Dendritic cell treated with granulocyte-macrophage colony-stimulating factor and Interleukin-4, amounts not matched to agents 40 ng/mL and 50 ng/mL, for 4 days (primary cell): ENCODE measurements at regions of chr4 and their contacts with region 1.

Region 1: GRCh38 chr4:56655209-56655626 is 25.9 kb downstream of the HOPX start:
- H3K4me3 Mint-ChIP-seq: peak overlapping the region; percentile 82
- H3K27ac Mint-ChIP-seq: no peak overlapping the region
- H3K4me1 Mint-ChIP-seq: peaks cover 30% of the 10 kb centered on the region
- H3K27me3 Mint-ChIP-seq: peaks cover 50% of the 10 kb centered on the region

Region 2: GRCh38 chr4:56762497-56763250 is 107.5 kb after region 1 on chr4:
- intact Hi-C with region 1: loop called (anchors 10 kb)
- H3K4me3 Mint-ChIP-seq: no peak overlapping the region
- H3K27ac Mint-ChIP-seq: no peak overlapping the region
- H3K4me1 Mint-ChIP-seq: peaks cover 37% of the 10 kb centered on the region
- H3K27me3 Mint-ChIP-seq: no peaks in the 10 kb centered on the region